Psoas muscle (tissue), 8 donors: ENCODE measurements at regions of chr9 and their contacts with region 1.

Region 1: GRCh38 chr9:104747558-104748358 is at the start of gene NIPSNAP3A:
- DNase-seq: peak; percentile 89 to 91
- ATAC-seq: peak; percentile 92 to 95 (median 94)
- H3K4me3 ChIP-seq: peak within 1 kb of the TSS; percentile 87
- H3K27ac ChIP-seq: peak within 1 kb of the TSS; percentile 96
- H3K4me1 ChIP-seq: peaks cover 12% of the 10 kb centered on the region
- H3K27me3 ChIP-seq: no peaks in the 10 kb centered on the region
- CTCF ChIP-seq: no peak
- total RNA-seq, gene NIPSNAP3A: 4.3 to 19.8 (median 9.7) TPM

Region 2: DNA sequence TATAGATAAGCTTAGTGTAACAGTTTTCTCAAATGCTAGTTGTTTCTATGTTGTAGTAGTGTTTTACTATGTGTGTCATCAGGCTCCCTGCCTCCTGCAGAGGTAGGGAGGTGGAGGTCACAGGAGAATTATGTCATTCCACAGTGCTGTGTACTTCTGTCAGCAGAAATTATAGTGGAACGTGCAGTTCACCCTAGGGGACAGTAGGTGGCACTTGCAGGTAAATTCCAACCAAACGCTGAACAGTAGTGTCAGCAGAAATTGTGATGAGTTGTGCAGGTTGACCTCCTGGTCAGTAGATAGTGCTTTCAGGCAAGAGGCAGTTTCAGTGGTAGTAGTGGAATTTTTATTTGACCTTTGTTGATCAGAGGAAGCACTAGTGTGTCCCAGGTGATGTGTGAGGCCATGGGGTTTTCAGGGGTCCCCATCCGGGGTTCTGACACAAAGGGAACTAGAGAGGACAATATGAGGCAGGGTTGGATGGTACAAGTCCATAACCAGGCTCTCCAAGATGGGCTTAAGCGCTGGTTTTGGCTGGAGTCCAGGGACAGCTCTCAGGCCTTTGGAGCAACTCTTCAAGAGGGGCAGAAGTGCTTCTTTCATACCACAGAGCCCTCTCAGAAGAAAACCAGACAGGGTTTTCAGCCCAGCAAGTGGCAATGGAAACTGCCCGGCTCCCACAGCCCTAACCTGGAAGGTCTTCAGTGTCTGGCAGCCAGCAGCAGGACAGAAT is 1349.7 kb before region 1 on chr9:
- intact Hi-C with region 1: loop called in 1 of 2 experiments (anchors 10 kb)
- DNase-seq: no peak
- ATAC-seq: peak in 2 of 4 donors; percentile 51 to 54
- H3K4me3 ChIP-seq: no peak overlapping the region
- H3K27ac ChIP-seq: no peak overlapping the region
- H3K4me1 ChIP-seq: no peaks in the 10 kb centered on the region
- H3K27me3 ChIP-seq: no peaks in the 10 kb centered on the region
- CTCF ChIP-seq: peak; percentile 50

Region 3: GRCh38 chr9:104093647-104094533 is 653.9 kb before region 1 on chr9 and contains the start of gene SMC2:
- intact Hi-C with region 1: loop called in 1 of 2 experiments (anchors 10 kb)
- DNase-seq: peak; percentile 95 to 97
- ATAC-seq: peak; percentile 96 to 97 (median 97)
- H3K4me3 ChIP-seq: peak within 1 kb of the TSS; percentile 70
- H3K27ac ChIP-seq: peak within 1 kb of the TSS; percentile 97
- H3K4me1 ChIP-seq: peaks cover 22% of the 10 kb centered on the region
- H3K27me3 ChIP-seq: no peaks in the 10 kb centered on the region
- CTCF ChIP-seq: no peak
- total RNA-seq, gene SMC2: 3.1 to 6.3 (median 3.2) TPM

Region 4: GRCh38 chr9:104991144-104991953 is 243.6 kb after region 1 on chr9:
- intact Hi-C with region 1: no loop called
- DNase-seq: peak; percentile 93 to 97
- ATAC-seq: peak; percentile 87 to 91 (median 90)
- H3K4me3 ChIP-seq: peak overlapping the region; percentile 76
- H3K27ac ChIP-seq: peak overlapping the region; percentile 98
- H3K4me1 ChIP-seq: peaks cover 30% of the 10 kb centered on the region
- H3K27me3 ChIP-seq: no peaks in the 10 kb centered on the region
- CTCF ChIP-seq: no peak

Region 5: DNA sequence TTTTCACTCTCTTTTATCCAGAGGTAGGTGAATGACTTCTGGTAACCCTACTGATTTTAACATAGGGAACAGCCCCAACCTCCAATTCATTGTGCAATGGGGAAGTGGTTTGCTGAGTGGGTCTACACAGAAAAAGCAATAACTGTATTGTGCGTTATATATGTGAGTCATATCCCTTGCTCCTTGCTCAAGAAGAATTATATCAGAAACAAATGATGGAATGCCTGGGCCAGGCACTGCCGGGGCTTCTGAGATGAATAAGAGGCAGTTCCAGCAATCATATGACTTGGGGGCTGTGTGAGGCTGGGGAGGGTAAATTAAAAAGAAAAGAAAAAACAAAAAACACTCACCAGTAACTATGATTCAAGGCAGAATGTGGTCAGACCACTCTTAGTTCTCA is 259.4 kb after region 1 on chr9:
- intact Hi-C with region 1: no loop called
- DNase-seq: peak in 1 of 2 donors; percentile 17
- ATAC-seq: peak in 2 of 4 donors; percentile 27 to 38
- H3K4me3 ChIP-seq: no peak overlapping the region
- H3K27ac ChIP-seq: no peak overlapping the region
- H3K4me1 ChIP-seq: no peaks in the 10 kb centered on the region
- H3K27me3 ChIP-seq: no peaks in the 10 kb centered on the region
- CTCF ChIP-seq: no peak